ENCODE measurements at regions of chr16 and their contacts with region 1.

Region 1: GRCh38 chr16:4580245-4580644 is 24.1 kb downstream of the C16orf96 start:
- DNase-seq: no peak
- ATAC-seq: no peak
- H3K4me3 Mint-ChIP-seq: no peak overlapping the region
- H3K27ac Mint-ChIP-seq: no peak overlapping the region
- H3K4me1 Mint-ChIP-seq: no peaks in the 10 kb centered on the region
- H3K27me3 Mint-ChIP-seq: peaks cover 3% of the 10 kb centered on the region
- CTCF ChIP-seq: no peak

Region 2: DNA sequence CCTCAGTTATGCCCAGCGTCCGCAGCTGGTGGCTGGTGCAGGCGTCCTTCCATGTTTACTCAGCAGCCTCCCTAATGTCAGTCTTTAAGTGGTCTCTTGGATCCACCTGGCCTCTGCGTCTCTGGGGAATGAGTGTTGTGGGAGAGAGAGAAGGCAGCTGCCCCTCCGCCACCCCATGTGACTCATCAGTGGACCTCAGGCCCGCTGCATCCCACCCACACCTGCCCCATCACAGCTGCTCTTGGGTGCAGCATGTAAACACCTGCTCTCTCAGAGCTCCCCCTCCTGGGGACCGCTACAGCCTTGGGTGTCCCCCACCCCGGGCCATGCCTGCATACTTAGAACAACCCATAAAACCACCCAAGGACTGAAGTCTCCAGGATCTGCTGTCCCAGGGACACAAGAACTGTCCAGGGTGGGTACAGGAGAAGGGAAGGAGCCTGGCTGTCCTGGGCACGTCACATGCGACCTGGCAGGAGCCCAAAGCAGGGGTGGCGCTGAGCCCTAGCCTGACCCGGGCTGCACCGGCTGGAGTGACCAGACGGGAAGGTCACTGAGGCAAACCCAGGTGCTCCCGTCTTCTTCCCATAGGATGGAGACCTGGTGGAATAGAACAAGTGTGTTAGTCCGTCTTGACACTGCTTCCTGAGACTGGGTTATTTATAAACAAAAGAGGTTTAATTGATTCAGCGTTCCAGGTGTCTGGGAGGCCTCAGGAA is 1089.2 kb before region 1 on chr16:
- CTCF ChIA-PET with region 1: no interaction called
- POLR2A ChIA-PET with region 1: no interaction called
- intact Hi-C with region 1: no loop called
- DNase-seq: no peak
- ATAC-seq: no peak
- H3K4me3 Mint-ChIP-seq: no peak overlapping the region
- H3K27ac Mint-ChIP-seq: no peak overlapping the region
- H3K4me1 Mint-ChIP-seq: no peaks in the 10 kb centered on the region
- H3K27me3 Mint-ChIP-seq: no peaks in the 10 kb centered on the region
- CTCF ChIP-seq: no peak

Region 3: DNA sequence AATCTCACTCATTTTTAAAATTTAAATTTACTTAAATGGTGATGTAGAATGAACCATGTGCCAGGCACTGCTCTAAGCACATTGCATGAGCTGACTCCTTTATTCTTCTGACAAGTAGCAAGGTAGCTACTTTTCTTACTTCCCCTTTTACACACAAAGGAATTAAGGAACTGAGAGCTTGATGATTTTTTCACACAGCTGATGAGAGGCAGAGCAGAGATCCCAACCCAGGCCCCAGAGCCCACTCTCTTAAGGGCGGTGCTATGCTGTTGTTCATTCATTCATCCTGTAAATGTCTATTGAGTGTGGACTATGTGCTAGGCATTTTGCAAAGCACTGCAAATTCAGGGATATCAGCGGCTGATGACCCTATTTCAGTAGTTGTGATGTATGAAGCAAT is 395.8 kb after region 1 on chr16:
- CTCF ChIA-PET with region 1: no interaction called
- POLR2A ChIA-PET with region 1: interaction called, 10 read pairs
- intact Hi-C with region 1: no loop called
- DNase-seq: no peak
- ATAC-seq: peak; percentile 98
- H3K4me3 Mint-ChIP-seq: no peak overlapping the region
- H3K27ac Mint-ChIP-seq: peak overlapping the region; percentile 3
- H3K4me1 Mint-ChIP-seq: peaks cover 9% of the 10 kb centered on the region
- H3K27me3 Mint-ChIP-seq: peaks cover 17% of the 10 kb centered on the region
- CTCF ChIP-seq: no peak

Measured in activated B cell treated with CpG ODN at 0.5 μM for 24 hours (primary cell).